PC-9 (cell line): ENCODE measurements at regions of chr17 and their contacts with region 1.

Region 1: DNA sequence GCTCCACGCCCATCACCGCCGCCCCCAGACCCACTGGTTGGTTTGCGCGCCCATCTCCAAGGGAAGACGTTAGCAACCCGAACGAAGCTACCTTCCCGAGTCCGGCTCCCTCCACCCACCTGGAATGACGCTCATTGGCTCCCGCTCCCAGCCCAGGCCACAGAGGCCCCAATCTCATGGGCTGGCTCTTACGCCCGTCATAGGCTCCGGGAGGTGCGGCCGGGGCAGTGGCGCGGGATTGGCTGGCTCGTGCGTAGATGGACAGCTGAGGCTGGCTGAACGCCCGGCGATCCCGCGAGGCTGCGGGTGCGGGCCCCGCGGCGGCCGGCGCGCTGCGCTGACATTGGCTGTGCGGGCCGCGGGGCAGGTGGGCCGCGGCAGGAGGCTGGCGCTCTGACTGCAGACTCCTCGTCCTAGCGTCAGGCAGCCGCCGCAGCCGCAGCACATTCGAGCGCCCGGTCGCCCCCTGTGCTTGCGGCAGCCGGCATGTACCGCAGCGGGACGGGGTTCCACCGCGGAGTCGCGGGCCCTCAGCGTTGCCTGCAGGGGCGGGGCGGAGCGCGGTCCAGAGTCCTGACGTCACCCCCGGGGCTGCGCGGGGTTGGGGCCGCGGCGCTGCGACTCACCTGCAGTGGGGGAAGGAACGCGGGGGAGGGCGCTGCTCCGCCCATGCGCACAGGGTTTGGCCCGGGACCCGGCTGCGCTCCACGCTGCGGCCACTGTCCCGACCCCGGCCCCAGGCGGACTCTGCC is 453 bp upstream of the MYH10 start:
- DNase-seq: peak; percentile 49 to 89
- H3K4me3 ChIP-seq: peak overlapping the region; percentile 48; the same call in 1 of the 2 replicates
- H3K27ac ChIP-seq: no peak overlapping the region
- H3K4me1 ChIP-seq: no peaks in the 10 kb centered on the region
- H3K27me3 ChIP-seq: no peaks in the 10 kb centered on the region
- CTCF ChIP-seq: no peak

Region 2: DNA sequence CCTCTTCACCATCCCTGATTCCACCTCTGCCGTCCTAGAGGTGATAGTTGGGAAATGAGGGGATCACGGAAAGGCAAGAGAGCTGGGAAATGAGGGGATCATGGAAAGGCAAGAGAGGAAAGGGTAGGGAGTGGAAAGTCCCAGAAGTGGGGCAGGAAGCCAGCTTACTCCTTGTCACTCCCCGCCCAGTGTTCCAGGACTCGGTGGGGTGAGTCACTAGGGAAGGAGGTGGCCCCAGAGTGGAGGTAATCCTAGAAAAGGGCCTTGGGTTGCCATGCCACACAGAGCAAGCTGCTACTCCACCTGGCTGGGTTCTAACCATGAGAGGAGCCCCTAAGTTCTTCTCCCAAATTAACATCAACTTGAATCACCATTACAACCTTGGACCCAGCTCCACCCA is 527.4 kb before region 1 on chr17:
- CTCF ChIA-PET with region 1: interaction called, 11 read pairs
- POLR2A ChIA-PET with region 1: no interaction called
- intact Hi-C with region 1: no loop called
- DNase-seq: no peak
- H3K4me3 ChIP-seq: no peak overlapping the region
- H3K27ac ChIP-seq: no peak overlapping the region
- H3K4me1 ChIP-seq: no peaks in the 10 kb centered on the region
- H3K27me3 ChIP-seq: no peaks in the 10 kb centered on the region
- CTCF ChIP-seq: no peak

Region 3: GRCh38 chr17:8572764-8573163 is 58.2 kb before region 1 on chr17:
- CTCF ChIA-PET with region 1: no interaction called
- POLR2A ChIA-PET with region 1: no interaction called
- intact Hi-C with region 1: loop called (anchors 10 kb)
- DNase-seq: no peak
- H3K4me3 ChIP-seq: no peak overlapping the region
- H3K27ac ChIP-seq: no peak overlapping the region
- H3K4me1 ChIP-seq: no peaks in the 10 kb centered on the region
- H3K27me3 ChIP-seq: peaks cover 49% of the 10 kb centered on the region
- CTCF ChIP-seq: no peak